ENCODE measurements at regions of chr2 and their contacts with region 1.

Region 1: DNA sequence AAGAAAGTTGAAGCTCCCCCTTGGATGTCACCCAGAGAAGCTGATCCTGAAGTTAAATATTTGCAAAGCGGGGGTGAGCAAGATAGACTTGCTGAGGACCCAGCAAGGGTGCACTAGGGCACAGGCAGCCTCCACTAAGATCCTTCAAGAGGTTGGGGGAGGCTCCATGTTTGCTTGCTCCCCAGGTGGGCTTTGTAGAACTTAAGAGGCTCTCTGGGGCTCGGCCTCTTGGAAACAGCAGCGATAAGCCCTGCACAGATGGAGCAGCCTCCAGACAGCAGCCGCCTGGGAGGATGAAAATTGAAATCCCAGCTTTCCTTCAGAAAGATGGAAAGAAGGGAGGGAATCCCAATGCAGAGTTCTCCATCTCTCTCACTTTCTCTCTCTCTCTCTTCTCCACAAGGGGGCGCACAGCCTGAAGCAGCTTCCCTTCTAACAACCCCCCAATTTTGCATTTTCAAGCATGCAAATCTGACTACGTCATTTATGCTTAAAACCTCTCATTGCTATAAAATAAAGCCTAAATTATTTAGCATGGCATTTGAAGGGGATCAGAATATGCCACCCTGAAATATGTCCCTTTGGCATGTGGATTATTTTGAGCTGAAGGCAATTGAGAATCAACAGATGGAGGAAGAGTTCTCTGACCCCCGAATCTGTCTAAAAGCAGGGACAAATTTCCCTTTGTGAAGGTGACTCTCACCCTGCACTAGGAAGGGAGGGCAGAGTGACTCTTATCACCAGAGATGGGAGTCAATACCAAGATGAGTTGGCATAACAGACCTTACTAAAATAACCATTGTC is 185.7 kb upstream of the KLHL29 start:
- DNase-seq: peak; percentile 24
- ATAC-seq: peak; percentile 78
- H3K4me3 ChIP-seq: no peak overlapping the region
- H3K27ac ChIP-seq: no peak overlapping the region
- H3K4me1 ChIP-seq: no peaks in the 10 kb centered on the region
- H3K27me3 ChIP-seq: peaks cover 26% of the 10 kb centered on the region
- CTCF ChIP-seq: peak; percentile 40 to 87 (median 86); a peak in 5 of 6 replicates
- POLR2A ChIP-seq: no peak
- RAD21 ChIP-seq: peak; percentile 46

Region 2: GRCh38 chr2:23230885-23231284 is 31.6 kb after region 1 on chr2:
- CTCF ChIA-PET with region 1: no interaction called
- POLR2A ChIA-PET with region 1: no interaction called
- RAD21 ChIA-PET with region 1: no interaction called
- intact Hi-C with region 1: loop called (anchors 5 kb)
- DNase-seq: no peak
- ATAC-seq: no peak
- H3K4me3 ChIP-seq: no peak overlapping the region
- H3K27ac ChIP-seq: no peak overlapping the region
- H3K4me1 ChIP-seq: no peaks in the 10 kb centered on the region
- H3K27me3 ChIP-seq: 0 out of 2 replicates have a peak, but pooled peaks cover 5% of the 10 kb centered on the region
- CTCF ChIP-seq: no peak
- POLR2A ChIP-seq: no peak
- RAD21 ChIP-seq: no peak

Region 3: DNA sequence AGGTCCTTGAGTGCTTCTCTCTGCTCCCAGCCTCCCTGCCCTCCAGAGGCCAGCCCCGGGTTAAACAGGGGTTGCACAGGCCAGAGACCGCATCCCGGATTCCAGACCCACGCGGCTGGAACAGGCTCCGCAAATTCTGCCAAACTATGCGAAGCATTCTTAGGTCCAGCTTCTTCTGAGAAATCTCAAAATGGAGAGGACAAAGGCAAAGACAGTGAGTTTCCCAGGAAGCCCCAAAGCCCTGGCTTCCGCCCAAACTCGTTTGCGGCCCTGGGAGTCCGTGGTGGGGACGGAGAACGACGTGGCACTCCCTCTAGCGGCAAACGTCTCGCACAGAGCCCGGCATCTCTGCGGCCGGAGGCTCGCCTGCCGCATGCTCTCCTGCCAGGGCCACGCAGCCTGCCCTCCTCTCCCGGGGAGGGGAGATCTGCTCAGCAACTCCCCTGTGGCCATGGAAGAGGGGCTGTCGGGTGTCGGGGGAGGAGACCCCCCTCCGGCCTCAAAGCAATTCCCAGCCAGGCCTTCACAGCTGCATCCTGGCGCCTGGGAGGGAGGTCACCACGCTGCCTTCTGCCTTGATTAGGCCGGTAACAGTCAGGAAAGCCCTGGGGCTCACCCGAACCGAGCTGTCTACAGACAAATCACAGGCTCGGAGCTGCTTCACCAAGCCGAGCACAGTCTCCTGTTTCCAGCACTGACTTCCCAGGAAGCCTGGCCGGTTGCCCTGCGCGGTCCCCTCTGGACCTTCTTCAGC is 152.2 kb after region 1 on chr2:
- CTCF ChIA-PET with region 1: no interaction called
- POLR2A ChIA-PET with region 1: no interaction called
- RAD21 ChIA-PET with region 1: no interaction called
- intact Hi-C with region 1: loop called (anchors 1 kb)
- DNase-seq: peak; percentile 54
- ATAC-seq: peak; percentile 99
- H3K4me3 ChIP-seq: no peak overlapping the region
- H3K27ac ChIP-seq: no peak overlapping the region
- H3K4me1 ChIP-seq: peaks cover 0 to 10% of the 10 kb centered on the region in 2 experiments; a peak in 2 of 4 replicates
- H3K27me3 ChIP-seq: 0 out of 2 replicates have a peak, but pooled peaks cover 1% of the 10 kb centered on the region
- CTCF ChIP-seq: peak; percentile 54 to 85 (median 84); a peak in 5 of 6 replicates
- POLR2A ChIP-seq: no peak
- RAD21 ChIP-seq: peak; percentile 67

Region 4: GRCh38 chr2:23460228-23460627 is 260.9 kb after region 1 on chr2:
- CTCF ChIA-PET with region 1: no interaction called
- POLR2A ChIA-PET with region 1: no interaction called
- RAD21 ChIA-PET with region 1: no interaction called
- intact Hi-C with region 1: loop called (anchors 5 kb)
- DNase-seq: peak; percentile 13
- ATAC-seq: peak; percentile 86
- H3K4me3 ChIP-seq: no peak overlapping the region
- H3K27ac ChIP-seq: no peak overlapping the region
- H3K4me1 ChIP-seq: peaks cover 0 to 1% of the 10 kb centered on the region in 2 experiments; a peak in 1 of 4 replicates
- H3K27me3 ChIP-seq: no peaks in the 10 kb centered on the region
- CTCF ChIP-seq: peak; percentile 32 to 72 (median 71); a peak in 4 of 6 replicates
- POLR2A ChIP-seq: no peak
- RAD21 ChIP-seq: peak; percentile 59

Region 5: DNA sequence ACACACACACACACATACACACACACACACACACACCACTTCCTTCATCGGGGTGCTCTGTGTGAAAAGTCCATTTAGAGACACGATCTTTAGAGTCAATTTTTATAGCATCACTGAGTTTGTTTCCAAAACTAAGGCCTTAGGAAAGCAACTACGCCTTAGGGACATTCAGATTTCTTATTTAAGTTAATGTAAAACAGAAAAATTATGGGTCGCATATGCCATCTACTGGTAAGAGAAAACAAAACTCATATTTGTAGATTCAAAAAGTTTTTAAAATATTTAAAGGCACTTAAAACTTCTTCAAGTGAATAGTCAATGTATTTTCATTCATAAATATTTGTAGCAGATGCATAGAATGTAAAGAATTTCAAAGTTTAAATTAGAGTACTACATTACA is 561.4 kb after region 1 on chr2:
- CTCF ChIA-PET with region 1: interaction called, 4 read pairs
- POLR2A ChIA-PET with region 1: no interaction called
- RAD21 ChIA-PET with region 1: no interaction called
- intact Hi-C with region 1: loop called (anchors 2 kb)
- DNase-seq: peak; percentile 18
- ATAC-seq: no peak
- H3K4me3 ChIP-seq: no peak overlapping the region
- H3K27ac ChIP-seq: no peak overlapping the region
- H3K4me1 ChIP-seq: peaks cover 0 to 10% of the 10 kb centered on the region in 2 experiments; a peak in 2 of 4 replicates
- H3K27me3 ChIP-seq: no peaks in the 10 kb centered on the region
- CTCF ChIP-seq: peak; percentile 10 to 45 (median 15); a peak in 2 of 6 replicates
- POLR2A ChIP-seq: no peak
- RAD21 ChIP-seq: peak; percentile 44

Measured in HCT116 (cell line).